PC-3 (cell line): ENCODE measurements at regions of chr16 and their contacts with region 1.

Region 1: DNA sequence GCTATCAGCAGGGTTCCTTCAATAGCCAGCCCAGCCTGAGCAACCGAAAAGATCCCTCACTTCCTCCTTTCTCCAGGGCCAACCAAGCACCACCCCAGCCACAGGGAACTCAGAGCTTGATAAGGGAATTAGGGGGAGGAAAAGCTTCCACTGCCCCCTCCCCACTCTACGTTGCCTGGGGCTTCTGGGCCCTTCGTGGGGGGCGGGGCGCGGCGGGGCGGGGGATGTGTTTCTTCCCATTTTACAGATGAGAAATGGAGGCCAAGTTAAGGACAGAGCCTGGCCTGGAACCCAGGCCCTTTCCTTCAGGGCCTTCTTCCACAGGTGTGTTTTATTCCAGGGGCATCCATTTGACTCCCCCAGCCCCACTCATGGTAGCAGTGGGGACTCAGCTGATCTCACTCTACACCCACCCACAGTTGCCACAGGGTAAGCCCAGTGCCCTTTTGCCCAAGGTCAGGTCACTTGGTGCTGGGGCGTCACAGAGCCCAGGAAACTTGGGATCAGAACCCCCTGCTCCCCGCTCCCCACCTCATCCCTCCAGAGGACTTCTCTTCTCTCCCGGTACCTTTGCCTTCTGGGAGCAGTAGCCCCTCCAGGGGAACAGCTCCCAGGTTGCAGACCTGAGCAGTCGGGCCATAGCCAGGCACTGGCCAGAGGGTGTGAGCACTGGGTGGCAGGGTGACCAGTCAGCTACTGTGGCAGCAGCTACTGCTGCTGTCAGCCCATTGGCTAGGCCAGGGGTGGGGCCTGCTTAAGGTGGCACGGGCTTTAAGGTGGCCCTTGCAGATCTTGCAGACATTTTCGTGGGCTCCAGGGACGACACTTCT is at the start of gene LDHD:
- DNase-seq: peak; percentile 75
- ATAC-seq: peak; percentile 100
- H3K4me3 ChIP-seq: peak within 1 kb of the TSS; percentile 61
- H3K27ac ChIP-seq: no peak within 1 kb of the TSS
- H3K4me1 ChIP-seq: peaks cover 7% of the 10 kb centered on the region
- H3K27me3 ChIP-seq: no peaks in the 10 kb centered on the region
- CTCF ChIP-seq: no peak
- total RNA-seq, gene LDHD: 3.1 and 3.7 TPM in 2 replicates

Region 2: GRCh38 chr16:74623214-74623842 is 493.0 kb before region 1 on chr16:
- CTCF ChIA-PET with region 1: no interaction called
- POLR2A ChIA-PET with region 1: no interaction called
- intact Hi-C with region 1: no loop called
- DNase-seq: peak; percentile 59
- ATAC-seq: peak; percentile 56
- H3K4me3 ChIP-seq: no peak overlapping the region
- H3K27ac ChIP-seq: no peak overlapping the region
- H3K4me1 ChIP-seq: no peaks in the 10 kb centered on the region
- H3K27me3 ChIP-seq: no peaks in the 10 kb centered on the region
- CTCF ChIP-seq: peak; percentile 71

Region 3: DNA sequence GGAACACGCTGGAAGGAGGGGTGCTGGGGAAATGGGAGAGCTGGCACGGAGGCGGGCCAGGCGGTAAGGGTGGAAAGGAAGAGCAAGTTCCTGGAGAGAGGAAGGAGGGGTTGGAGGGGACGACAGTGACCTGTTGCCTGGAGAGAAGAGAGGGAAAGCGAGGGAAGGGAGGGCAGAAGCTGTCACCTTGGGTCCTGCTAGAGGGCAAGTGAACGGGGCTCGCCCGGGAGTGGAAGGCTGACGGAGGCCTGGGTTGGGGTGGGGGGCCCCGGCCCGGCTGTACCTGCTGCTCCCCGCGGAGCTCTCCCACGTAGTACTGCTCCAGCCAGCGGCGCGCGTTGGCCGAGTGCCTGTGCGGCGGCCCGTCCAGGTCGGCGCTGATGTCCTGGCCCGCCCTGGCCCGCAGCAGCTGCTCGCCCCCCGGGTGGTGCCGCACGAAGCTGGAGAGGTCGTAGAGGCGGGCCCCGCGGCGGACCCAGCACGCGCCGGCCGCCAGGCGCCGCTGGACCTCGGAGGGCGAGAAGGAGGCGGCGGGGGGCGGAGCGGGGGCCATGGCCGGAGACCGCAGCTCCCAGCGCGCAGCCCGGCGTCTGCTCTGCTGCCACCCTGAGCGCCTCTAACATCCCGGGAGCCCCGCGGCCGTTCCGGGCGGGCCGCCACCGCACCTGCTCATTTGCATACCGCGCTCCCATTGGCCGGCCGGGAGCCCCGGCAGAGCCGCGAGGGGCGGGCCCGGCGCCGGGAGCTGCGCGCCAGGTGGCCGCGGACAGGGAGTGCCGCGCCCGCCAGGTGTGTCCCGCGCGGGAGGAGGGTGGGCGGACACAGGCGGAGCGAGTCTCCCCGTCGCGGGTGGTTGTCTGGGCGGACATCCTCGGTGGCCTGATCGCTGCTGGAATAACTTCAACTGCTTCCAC is 341.8 kb before region 1 on chr16 and contains the start of gene FA2H:
- CTCF ChIA-PET with region 1: no interaction called
- POLR2A ChIA-PET with region 1: no interaction called
- intact Hi-C with region 1: no loop called
- DNase-seq: peak; percentile 88
- ATAC-seq: peak; percentile 98
- H3K4me3 ChIP-seq: peak within 1 kb of the TSS; percentile 74
- H3K27ac ChIP-seq: peak within 1 kb of the TSS; percentile 14; the same call in 1 of the 2 replicates
- H3K4me1 ChIP-seq: peaks cover 7% of the 10 kb centered on the region; the same call in 1 of the 2 replicates
- H3K27me3 ChIP-seq: no peaks in the 10 kb centered on the region
- CTCF ChIP-seq: peak; percentile 35; the same call in 1 of the 2 replicates
- total RNA-seq, gene FA2H: 3.9 and 6.2 TPM in 2 replicates

Region 4: DNA sequence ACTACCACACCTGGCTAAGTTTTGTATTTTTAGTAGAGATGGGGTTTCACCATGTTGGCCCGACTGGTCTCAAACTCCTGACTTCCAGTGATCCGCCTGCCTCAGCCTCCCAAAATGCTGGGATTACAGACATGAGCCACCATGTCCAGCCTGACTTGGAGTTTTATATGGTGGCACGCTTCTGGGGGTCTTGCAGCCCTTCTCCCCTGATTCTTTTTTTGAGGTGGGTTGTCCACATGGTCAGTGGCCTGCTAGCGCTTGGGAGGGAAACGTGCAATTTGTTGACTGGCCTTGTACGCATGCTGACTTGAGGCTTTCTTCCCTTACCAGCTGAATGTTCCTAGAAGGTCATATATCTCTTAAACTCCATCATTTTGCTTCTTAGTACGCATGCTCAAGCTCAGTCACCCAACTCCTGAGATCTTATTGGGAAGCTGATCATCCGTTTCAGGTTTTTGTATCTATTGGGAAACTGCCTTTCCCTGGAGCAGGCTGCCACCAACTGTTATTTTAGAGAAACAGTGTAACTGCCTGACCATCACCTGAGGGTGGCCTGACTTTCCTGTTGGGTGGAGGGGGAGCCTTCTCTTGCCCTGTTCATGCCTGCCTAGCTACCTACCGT is 14.0 kb after region 1 on chr16:
- CTCF ChIA-PET with region 1: no interaction called
- POLR2A ChIA-PET with region 1: interaction called, 12 read pairs
- intact Hi-C with region 1: no loop called
- DNase-seq: peak; percentile 13
- ATAC-seq: peak; percentile 42; the same call in 1 of the 2 replicates
- H3K4me3 ChIP-seq: no peak overlapping the region
- H3K27ac ChIP-seq: no peak overlapping the region
- H3K4me1 ChIP-seq: no peaks in the 10 kb centered on the region
- H3K27me3 ChIP-seq: no peaks in the 10 kb centered on the region
- CTCF ChIP-seq: no peak

Region 5: GRCh38 chr16:75148311-75149195 is 32.3 kb after region 1 on chr16 and contains the start of gene ZFP1:
- CTCF ChIA-PET with region 1: no interaction called
- POLR2A ChIA-PET with region 1: no interaction called
- intact Hi-C with region 1: loop called (anchors 2 kb)
- DNase-seq: peak; percentile 87
- ATAC-seq: peak; percentile 90
- H3K4me3 ChIP-seq: peak within 1 kb of the TSS; percentile 98
- H3K27ac ChIP-seq: peak within 1 kb of the TSS; percentile 85
- H3K4me1 ChIP-seq: no peaks in the 10 kb centered on the region
- H3K27me3 ChIP-seq: no peaks in the 10 kb centered on the region
- CTCF ChIP-seq: no peak
- total RNA-seq, gene ZFP1: 3.3 and 3.5 TPM in 2 replicates

Region 6: GRCh38 chr16:75175074-75175473 is 58.8 kb after region 1 on chr16:
- CTCF ChIA-PET with region 1: no interaction called
- POLR2A ChIA-PET with region 1: no interaction called
- intact Hi-C with region 1: no loop called
- DNase-seq: no peak
- ATAC-seq: no peak
- H3K4me3 ChIP-seq: no peak overlapping the region
- H3K27ac ChIP-seq: no peak overlapping the region
- H3K4me1 ChIP-seq: no peaks in the 10 kb centered on the region
- H3K27me3 ChIP-seq: no peaks in the 10 kb centered on the region
- CTCF ChIP-seq: no peak